ENCODE measurements at regions of chr19 and their contacts with region 1.

Region 1: GRCh38 chr19:43446746-43447489 is 18.5 kb downstream of the LYPD3 start:
- DNase-seq: no peak
- ATAC-seq: peak; percentile 91
- H3K4me3 ChIP-seq: no peak overlapping the region
- H3K27ac ChIP-seq: no peak overlapping the region
- H3K4me1 ChIP-seq: no peaks in the 10 kb centered on the region
- H3K27me3 ChIP-seq: peaks cover 0 to 2% of the 10 kb centered on the region in 2 experiments; a peak in 1 of 4 replicates
- CTCF ChIP-seq: peak; percentile 90 to 96 (median 91); a peak in 5 of 6 replicates
- EP300 ChIP-seq: no peak
- POLR2A ChIP-seq: no peak
- RAD21 ChIP-seq: peak; percentile 94

Region 2: DNA sequence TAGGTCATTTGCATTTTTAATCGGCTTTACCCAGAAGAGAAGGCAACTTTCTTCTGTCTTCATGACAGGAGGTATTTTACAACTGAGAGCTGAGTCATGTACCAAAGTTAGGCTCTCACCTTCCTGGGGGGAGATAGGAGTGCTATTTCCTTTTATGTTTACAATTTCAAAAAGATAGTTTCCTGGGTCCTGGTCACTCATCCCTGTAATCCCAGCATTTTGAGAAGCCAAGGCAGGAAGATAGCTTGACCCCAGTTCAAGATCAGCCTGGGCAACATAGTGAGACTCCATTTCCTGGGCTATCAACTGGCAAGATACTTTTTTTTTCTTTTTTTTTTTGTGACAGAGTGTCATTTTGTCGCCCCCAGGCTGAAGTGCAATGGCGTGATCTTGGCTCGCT is 10.9 kb after region 1 on chr19:
- CTCF ChIA-PET with region 1: interaction called, 31 read pairs
- POLR2A ChIA-PET with region 1: no interaction called
- RAD21 ChIA-PET with region 1: interaction called, 5 read pairs
- SMC1A ChIA-PET with region 1: interaction called, 21 read pairs
- in situ Hi-C with region 1: no loop called
- intact Hi-C with region 1: no loop called
- DNase-seq: no peak
- ATAC-seq: no peak
- H3K4me3 ChIP-seq: no peak overlapping the region
- H3K27ac ChIP-seq: no peak overlapping the region
- H3K4me1 ChIP-seq: no peaks in the 10 kb centered on the region
- H3K27me3 ChIP-seq: no peaks in the 10 kb centered on the region
- CTCF ChIP-seq: no peak
- EP300 ChIP-seq: no peak
- POLR2A ChIP-seq: no peak
- RAD21 ChIP-seq: no peak

Region 3: DNA sequence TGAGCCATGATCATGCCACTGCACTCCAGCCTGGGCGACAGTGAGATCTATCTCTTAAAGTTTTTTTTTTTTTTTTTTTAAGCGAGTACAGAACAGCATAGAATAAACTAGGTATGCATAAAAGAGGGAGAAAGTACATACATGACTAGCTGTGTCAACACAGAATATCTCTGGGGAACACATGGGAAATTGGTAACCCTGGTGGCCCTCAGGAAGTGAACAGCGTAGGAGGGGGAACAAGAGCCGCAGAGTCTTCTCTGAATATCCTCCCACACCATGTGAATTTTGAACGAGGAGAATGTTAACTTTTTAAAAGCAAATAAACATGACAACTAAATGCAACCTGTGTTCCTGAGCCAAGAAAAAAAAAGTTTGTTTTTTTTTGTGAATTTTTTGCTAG is 42.4 kb after region 1 on chr19:
- CTCF ChIA-PET with region 1: interaction called, 13 read pairs
- POLR2A ChIA-PET with region 1: no interaction called
- RAD21 ChIA-PET with region 1: interaction called, 4 read pairs
- SMC1A ChIA-PET with region 1: interaction called, 3 read pairs
- in situ Hi-C with region 1: no loop called
- intact Hi-C with region 1: no loop called
- DNase-seq: peak; percentile 44
- ATAC-seq: no peak
- H3K4me3 ChIP-seq: no peak overlapping the region
- H3K27ac ChIP-seq: no peak overlapping the region
- H3K4me1 ChIP-seq: no peaks in the 10 kb centered on the region
- H3K27me3 ChIP-seq: no peaks in the 10 kb centered on the region
- CTCF ChIP-seq: no peak
- EP300 ChIP-seq: no peak
- POLR2A ChIP-seq: no peak
- RAD21 ChIP-seq: no peak

Region 4: GRCh38 chr19:43503501-43504425 is 56.8 kb after region 1 on chr19:
- CTCF ChIA-PET with region 1: interaction called, 18 read pairs
- POLR2A ChIA-PET with region 1: no interaction called
- RAD21 ChIA-PET with region 1: interaction called, 22 read pairs
- SMC1A ChIA-PET with region 1: interaction called, 12 read pairs
- in situ Hi-C with region 1: no loop called
- intact Hi-C with region 1: loop called (anchors 5 kb)
- DNase-seq: peak; percentile 78
- ATAC-seq: peak; percentile 96
- H3K4me3 ChIP-seq: peak overlapping the region; percentile 67
- H3K27ac ChIP-seq: peak overlapping the region; percentile 73
- H3K4me1 ChIP-seq: peaks cover 4% of the 10 kb centered on the region
- H3K27me3 ChIP-seq: no peaks in the 10 kb centered on the region
- CTCF ChIP-seq: peak in 2 of 3 experiments; percentile 30 to 46; a peak in 4 of 6 replicates
- EP300 ChIP-seq: no peak
- POLR2A ChIP-seq: peak; percentile 75
- RAD21 ChIP-seq: no peak

Region 5: GRCh38 chr19:43526884-43527859 is 80.3 kb after region 1 on chr19 and contains the start of gene ETHE1:
- CTCF ChIA-PET with region 1: interaction called, 393 read pairs
- POLR2A ChIA-PET with region 1: interaction called, 5 read pairs
- RAD21 ChIA-PET with region 1: interaction called, 23 read pairs
- SMC1A ChIA-PET with region 1: interaction called, 194 read pairs
- in situ Hi-C with region 1: loop called (anchors 5 kb)
- intact Hi-C with region 1: no loop called
- DNase-seq: no peak
- ATAC-seq: peak; percentile 95
- H3K4me3 ChIP-seq: peak within 1 kb of the TSS; percentile 91
- H3K27ac ChIP-seq: peak within 1 kb of the TSS; percentile 65
- H3K4me1 ChIP-seq: peaks cover 3% of the 10 kb centered on the region; the same call in 1 of the 2 replicates
- H3K27me3 ChIP-seq: no peaks in the 10 kb centered on the region
- CTCF ChIP-seq: no peak
- EP300 ChIP-seq: no peak
- POLR2A ChIP-seq: peak; percentile 87
- RAD21 ChIP-seq: no peak
- polyA plus RNA-seq, gene ETHE1: 22.1 to 40.7 TPM

Region 6: GRCh38 chr19:43651758-43652545 is 205.0 kb after region 1 on chr19:
- CTCF ChIA-PET with region 1: interaction called, 14 read pairs
- POLR2A ChIA-PET with region 1: no interaction called
- RAD21 ChIA-PET with region 1: interaction called, 3 read pairs
- SMC1A ChIA-PET with region 1: interaction called, 7 read pairs
- in situ Hi-C with region 1: no loop called
- intact Hi-C with region 1: loop called (anchors 5 kb)
- DNase-seq: no peak
- ATAC-seq: peak; percentile 85
- H3K4me3 ChIP-seq: no peak overlapping the region
- H3K27ac ChIP-seq: no peak overlapping the region
- H3K4me1 ChIP-seq: no peaks in the 10 kb centered on the region
- H3K27me3 ChIP-seq: no peaks in the 10 kb centered on the region
- CTCF ChIP-seq: peak; percentile 70 to 75 (median 70)
- EP300 ChIP-seq: no peak
- POLR2A ChIP-seq: no peak
- RAD21 ChIP-seq: peak; percentile 79

Region 7: DNA sequence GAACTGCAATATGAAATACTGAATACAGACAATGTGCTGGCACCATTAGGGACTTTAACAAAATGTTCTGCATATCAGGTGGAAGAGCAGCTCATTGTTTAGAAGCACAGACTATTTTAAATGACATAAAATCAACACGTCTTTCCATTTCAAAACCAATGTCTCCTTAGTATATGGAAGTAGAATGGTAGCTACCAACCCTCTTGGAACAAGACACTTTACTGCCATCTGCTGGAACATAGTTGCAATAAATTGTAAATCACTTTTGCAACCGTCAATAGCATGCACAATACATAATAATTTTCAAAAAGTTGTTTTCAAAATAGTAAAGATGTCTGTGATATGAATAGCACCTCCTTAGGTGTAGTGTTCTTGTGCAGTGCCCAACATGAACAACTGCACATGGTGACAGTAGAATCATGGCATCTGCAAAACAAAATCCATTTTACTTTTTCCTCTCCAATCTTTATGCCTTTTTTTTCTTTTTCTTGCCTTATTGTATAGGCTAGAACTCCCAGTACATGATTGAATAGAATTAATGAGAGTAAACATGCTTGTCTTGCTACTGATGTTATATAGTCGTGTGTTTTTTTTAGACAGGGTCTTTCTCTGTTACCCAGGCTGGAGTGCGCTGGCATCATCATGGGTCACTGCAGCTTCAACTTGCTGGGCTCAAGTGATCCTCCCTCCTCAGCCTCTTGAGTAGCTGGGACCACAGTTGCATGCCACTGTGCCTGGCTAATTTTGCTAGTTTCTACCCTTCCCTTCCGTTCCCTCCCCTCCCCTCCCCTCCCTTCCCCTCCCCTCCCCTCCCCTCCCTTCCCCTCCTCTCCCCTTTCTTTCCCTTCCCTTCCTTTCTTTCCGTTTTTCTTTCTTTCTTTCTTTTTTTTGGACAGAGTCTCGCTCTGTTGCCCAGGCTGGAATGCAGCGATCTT is 363.1 kb after region 1 on chr19:
- CTCF ChIA-PET with region 1: interaction called, 9 read pairs
- POLR2A ChIA-PET with region 1: no interaction called
- RAD21 ChIA-PET with region 1: interaction called, 6 read pairs
- SMC1A ChIA-PET with region 1: interaction called, 7 read pairs
- in situ Hi-C with region 1: loop called (anchors 10 kb)
- intact Hi-C with region 1: no loop called
- DNase-seq: peak; percentile 24
- ATAC-seq: peak; percentile 87
- H3K4me3 ChIP-seq: no peak overlapping the region
- H3K27ac ChIP-seq: no peak overlapping the region
- H3K4me1 ChIP-seq: no peaks in the 10 kb centered on the region
- H3K27me3 ChIP-seq: no peaks in the 10 kb centered on the region
- CTCF ChIP-seq: peak; percentile 36 to 76 (median 54); a peak in 4 of 6 replicates
- EP300 ChIP-seq: no peak
- POLR2A ChIP-seq: no peak
- RAD21 ChIP-seq: peak; percentile 78

Measured in GM12878 (cell line).